Activated naive CD4-positive, alpha-beta T cell treated with anti-CD3 and anti-CD28 coated beads, Interleukin-2, amount 10 ng/mL, durations not matched to agents 7 days and 5 days (primary cell): ENCODE measurements at regions of chr6 and their contacts with region 1.

Region 1: GRCh38 chr6:24520929-24521546 is 26.3 kb downstream of the ALDH5A1 start:
- DNase-seq: peak; percentile 50
- H3K4me3 Mint-ChIP-seq: no peak overlapping the region
- H3K27ac Mint-ChIP-seq: no peak overlapping the region
- H3K4me1 Mint-ChIP-seq: no peaks in the 10 kb centered on the region
- H3K27me3 Mint-ChIP-seq: no peaks in the 10 kb centered on the region

Region 2: GRCh38 chr6:24494821-24495795 is 25.9 kb before region 1 on chr6 and contains the start of gene ALDH5A1:
- CTCF ChIA-PET with region 1: interaction called, 25 read pairs
- DNase-seq: peak; percentile 85
- H3K4me3 Mint-ChIP-seq: peak within 1 kb of the TSS; percentile 74
- H3K27ac Mint-ChIP-seq: peak within 1 kb of the TSS; percentile 58
- H3K4me1 Mint-ChIP-seq: peaks cover 16% of the 10 kb centered on the region
- H3K27me3 Mint-ChIP-seq: peaks cover 12% of the 10 kb centered on the region

Region 3: GRCh38 chr6:24534329-24534728 is 13.3 kb after region 1 on chr6:
- CTCF ChIA-PET with region 1: interaction called, 16 read pairs
- DNase-seq: no peak
- H3K4me3 Mint-ChIP-seq: no peak overlapping the region
- H3K27ac Mint-ChIP-seq: no peak overlapping the region
- H3K4me1 Mint-ChIP-seq: no peaks in the 10 kb centered on the region
- H3K27me3 Mint-ChIP-seq: no peaks in the 10 kb centered on the region